WTC11 (cell line): ENCODE measurements at regions of chr16 and their contacts with region 1.

Region 1: DNA sequence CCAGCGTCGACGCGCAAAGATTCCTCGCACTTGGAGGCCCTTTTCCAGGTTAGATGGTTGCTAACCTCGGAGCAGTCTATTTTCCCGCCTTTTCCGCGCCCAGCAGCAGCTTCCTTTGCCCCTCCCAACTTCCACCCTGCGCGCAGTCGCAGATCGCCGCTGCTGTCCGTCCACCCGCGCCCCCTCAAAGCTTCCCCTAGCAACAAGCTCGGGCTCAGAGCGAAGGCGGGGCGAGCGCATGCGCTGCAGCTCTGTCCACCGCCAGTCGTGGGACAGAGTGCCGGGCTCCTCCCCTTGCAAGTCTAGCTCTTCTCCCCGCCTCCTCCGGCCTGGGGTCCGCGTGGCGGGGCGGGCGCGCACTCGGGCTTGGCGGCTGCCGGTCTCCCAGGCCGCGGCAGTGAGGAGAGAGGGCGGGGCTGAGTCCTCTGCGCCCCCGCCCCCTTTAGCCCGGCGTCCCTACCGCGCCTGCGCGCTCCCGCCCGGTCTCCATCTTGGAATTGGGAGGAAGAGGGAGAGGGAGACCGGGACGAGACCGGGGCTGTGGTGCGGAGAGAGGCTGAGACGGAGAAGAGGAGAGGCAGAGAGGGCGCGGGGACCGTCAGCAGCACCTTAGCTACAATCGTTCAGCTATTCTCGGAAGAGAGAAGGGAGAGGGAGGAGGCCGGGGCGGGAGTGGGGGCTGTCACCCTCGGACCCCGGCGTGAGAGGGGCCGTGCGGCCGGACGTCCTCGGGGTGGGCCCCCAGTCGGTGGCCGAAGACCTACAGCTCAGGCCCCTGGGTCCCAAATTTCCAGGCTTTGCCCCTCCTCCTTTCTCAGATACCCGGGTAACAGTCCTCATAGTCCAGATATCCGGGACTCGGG is at the start of gene TAOK2:
- DNase-seq: peak; percentile 100
- ATAC-seq: peak; percentile 97
- H3K4me3 Mint-ChIP-seq: peak within 1 kb of the TSS; percentile 92
- H3K27ac Mint-ChIP-seq: peak within 1 kb of the TSS; percentile 82
- H3K4me1 Mint-ChIP-seq: peaks cover 27% of the 10 kb centered on the region
- H3K27me3 Mint-ChIP-seq: peaks cover 21% of the 10 kb centered on the region
- CTCF ChIP-seq: no peak
- total RNA-seq, gene TAOK2: 38.3 to 42.4 TPM (median 39.2 TPM) in 3 replicates

Region 2: GRCh38 chr16:29926005-29926710 is 47.5 kb before region 1 on chr16 and contains the start of gene KCTD13:
- CTCF ChIA-PET with region 1: no interaction called
- POLR2A ChIA-PET with region 1: interaction called, 14 read pairs
- DNase-seq: peak; percentile 91
- ATAC-seq: peak; percentile 95
- H3K4me3 Mint-ChIP-seq: peak within 1 kb of the TSS; percentile 93
- H3K27ac Mint-ChIP-seq: peak within 1 kb of the TSS; percentile 97
- H3K4me1 Mint-ChIP-seq: peaks cover 18% of the 10 kb centered on the region
- H3K27me3 Mint-ChIP-seq: no peaks in the 10 kb centered on the region; the same call in 1 of the 2 replicates
- CTCF ChIP-seq: no peak
- total RNA-seq, gene KCTD13: 18.5 to 20.9 TPM (median 19.4 TPM) in 3 replicates